ENCODE measurements at regions of chr6 and their contacts with region 1.

Region 1: DNA sequence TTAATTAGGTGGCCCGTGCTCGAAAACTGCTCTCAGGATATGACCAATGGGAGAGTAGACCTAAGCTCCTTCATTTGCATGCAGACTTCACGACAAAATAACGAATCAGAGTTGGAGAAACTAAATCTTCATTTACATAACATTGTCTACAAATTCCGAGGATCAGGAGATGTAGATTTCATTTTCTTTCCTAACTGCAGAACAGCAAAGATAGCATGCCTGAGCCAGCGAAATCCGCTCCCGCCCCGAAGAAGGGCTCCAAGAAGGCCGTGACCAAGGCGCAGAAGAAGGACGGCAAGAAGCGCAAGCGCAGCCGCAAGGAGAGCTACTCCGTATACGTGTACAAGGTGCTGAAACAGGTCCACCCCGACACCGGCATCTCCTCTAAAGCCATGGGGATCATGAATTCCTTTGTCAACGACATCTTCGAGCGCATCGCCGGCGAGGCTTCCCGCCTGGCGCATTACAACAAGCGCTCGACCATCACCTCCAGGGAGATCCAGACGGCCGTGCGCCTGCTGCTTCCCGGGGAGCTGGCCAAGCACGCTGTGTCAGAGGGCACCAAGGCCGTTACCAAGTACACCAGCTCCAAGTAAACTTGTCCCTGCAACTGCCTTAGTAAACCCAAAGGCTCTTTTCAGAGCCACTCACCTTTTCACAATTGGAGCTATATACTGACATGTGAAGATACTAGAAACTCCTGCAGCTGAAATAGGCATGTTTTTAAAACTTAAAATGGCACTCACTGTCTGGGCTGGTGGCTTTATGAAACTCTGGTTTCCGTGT is 96.5 kb downstream of the HFE start:
- DNase-seq: peak; percentile 93
- ATAC-seq: peak; percentile 86
- H3K4me3 ChIP-seq: peak overlapping the region; percentile 51 to 66
- H3K27ac ChIP-seq: peak overlapping the region; percentile 95
- H3K4me1 ChIP-seq: peaks cover 30% of the 10 kb centered on the region
- H3K27me3 ChIP-seq: no peaks in the 10 kb centered on the region
- CTCF ChIP-seq: no peak

Region 2: GRCh38 chr6:26131618-26132017 is 52.2 kb before region 1 on chr6:
- CTCF ChIA-PET with region 1: no interaction called
- POLR2A ChIA-PET with region 1: no interaction called
- in situ Hi-C with region 1: no loop called
- intact Hi-C with region 1: no loop called
- DNase-seq: no peak
- ATAC-seq: no peak
- H3K4me3 ChIP-seq: no peak overlapping the region
- H3K27ac ChIP-seq: no peak overlapping the region
- H3K4me1 ChIP-seq: peaks cover 16% of the 10 kb centered on the region; the same call in 1 of the 2 replicates
- H3K27me3 ChIP-seq: no peaks in the 10 kb centered on the region
- CTCF ChIP-seq: no peak

Region 3: DNA sequence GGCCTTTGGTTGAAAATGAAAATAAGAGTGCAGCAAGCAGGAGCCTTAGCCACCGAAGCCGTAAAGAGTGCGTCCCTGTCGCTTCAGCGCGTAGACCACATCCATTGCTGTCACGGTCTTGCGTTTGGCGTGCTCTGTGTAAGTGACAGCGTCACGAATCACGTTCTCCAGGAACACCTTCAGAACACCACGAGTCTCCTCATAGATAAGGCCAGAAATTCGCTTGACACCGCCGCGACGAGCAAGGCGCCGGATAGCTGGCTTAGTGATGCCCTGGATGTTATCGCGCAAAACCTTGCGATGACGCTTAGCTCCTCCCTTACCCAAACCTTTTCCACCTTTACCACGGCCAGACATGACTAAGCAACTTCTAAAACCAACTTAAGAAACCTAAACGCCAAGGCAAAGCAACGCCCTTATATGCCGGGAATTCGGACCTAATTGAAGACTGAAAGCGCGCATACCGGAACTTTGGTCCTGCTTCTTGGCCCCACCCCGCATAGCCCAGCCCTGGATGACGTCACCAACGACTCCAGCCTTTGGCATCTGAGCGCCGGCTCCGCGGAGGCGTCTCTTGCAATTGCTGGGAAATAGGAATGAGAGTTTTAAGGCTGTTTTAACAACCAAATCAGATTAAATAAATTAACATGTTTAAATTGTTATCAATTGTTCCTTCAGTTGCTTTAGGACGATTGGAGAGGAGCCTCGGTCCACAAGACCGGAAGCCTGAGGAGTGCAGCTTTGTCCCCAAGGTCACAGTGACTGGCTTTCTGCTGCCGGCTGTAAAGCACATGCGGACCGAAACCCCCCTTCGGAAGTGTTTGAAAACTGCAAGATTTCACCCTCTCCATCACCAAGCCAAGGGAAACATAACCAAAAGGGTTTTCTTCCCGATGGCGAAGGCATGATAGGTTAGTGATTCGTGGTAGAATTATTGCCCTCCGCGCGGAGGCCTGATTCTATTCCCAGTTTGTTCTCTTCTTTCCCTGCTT is 101.7 kb after region 1 on chr6:
- CTCF ChIA-PET with region 1: no interaction called
- POLR2A ChIA-PET with region 1: interaction called, 3 read pairs
- in situ Hi-C with region 1: no loop called
- intact Hi-C with region 1: loop called (anchors 10 kb)
- DNase-seq: peak; percentile 100
- ATAC-seq: peak; percentile 89
- H3K4me3 ChIP-seq: peak overlapping the region; percentile 66 to 96
- H3K27ac ChIP-seq: peak overlapping the region; percentile 95
- H3K4me1 ChIP-seq: peaks cover 12% of the 10 kb centered on the region; the same call in 1 of the 2 replicates
- H3K27me3 ChIP-seq: no peaks in the 10 kb centered on the region
- CTCF ChIP-seq: no peak

Region 4: DNA sequence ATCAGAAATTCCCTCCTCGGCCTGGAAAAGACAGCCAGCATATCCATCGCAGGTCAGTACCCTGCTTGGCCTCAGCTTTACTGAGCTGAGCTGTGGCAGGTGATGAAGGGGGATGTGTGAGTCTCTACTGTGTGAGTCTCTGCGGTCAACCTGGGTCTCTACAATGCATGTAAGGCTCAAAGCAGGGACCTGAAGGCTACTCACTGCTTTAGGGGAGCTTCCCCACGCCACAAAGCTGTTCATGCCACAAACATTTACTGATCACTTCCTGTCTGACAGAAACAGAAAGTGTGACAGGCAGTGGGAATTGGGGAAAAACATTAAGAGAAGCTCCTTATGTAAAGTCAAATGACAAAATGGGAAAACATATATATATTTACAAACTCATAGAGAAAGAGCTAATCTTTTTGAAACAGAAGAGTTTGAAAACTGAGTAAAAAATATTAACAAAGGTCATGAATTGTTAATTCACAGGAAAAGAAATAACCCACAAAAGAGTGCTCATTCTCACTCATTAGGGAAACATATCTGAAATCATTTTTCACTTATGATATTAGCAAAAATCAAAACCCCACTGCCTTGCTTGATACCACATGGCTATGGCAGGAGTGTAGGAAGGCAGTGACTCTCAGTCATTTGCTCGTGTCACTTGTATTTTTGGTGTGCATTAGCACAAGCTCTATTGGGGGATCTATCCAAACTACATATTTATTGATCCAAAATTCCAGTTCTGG is 262.3 kb after region 1 on chr6:
- CTCF ChIA-PET with region 1: no interaction called
- POLR2A ChIA-PET with region 1: no interaction called
- in situ Hi-C with region 1: no loop called
- intact Hi-C with region 1: no loop called
- DNase-seq: no peak
- ATAC-seq: no peak
- H3K4me3 ChIP-seq: no peak overlapping the region
- H3K27ac ChIP-seq: no peak overlapping the region
- H3K4me1 ChIP-seq: no peaks in the 10 kb centered on the region
- H3K27me3 ChIP-seq: no peaks in the 10 kb centered on the region
- CTCF ChIP-seq: no peak

Region 5: DNA sequence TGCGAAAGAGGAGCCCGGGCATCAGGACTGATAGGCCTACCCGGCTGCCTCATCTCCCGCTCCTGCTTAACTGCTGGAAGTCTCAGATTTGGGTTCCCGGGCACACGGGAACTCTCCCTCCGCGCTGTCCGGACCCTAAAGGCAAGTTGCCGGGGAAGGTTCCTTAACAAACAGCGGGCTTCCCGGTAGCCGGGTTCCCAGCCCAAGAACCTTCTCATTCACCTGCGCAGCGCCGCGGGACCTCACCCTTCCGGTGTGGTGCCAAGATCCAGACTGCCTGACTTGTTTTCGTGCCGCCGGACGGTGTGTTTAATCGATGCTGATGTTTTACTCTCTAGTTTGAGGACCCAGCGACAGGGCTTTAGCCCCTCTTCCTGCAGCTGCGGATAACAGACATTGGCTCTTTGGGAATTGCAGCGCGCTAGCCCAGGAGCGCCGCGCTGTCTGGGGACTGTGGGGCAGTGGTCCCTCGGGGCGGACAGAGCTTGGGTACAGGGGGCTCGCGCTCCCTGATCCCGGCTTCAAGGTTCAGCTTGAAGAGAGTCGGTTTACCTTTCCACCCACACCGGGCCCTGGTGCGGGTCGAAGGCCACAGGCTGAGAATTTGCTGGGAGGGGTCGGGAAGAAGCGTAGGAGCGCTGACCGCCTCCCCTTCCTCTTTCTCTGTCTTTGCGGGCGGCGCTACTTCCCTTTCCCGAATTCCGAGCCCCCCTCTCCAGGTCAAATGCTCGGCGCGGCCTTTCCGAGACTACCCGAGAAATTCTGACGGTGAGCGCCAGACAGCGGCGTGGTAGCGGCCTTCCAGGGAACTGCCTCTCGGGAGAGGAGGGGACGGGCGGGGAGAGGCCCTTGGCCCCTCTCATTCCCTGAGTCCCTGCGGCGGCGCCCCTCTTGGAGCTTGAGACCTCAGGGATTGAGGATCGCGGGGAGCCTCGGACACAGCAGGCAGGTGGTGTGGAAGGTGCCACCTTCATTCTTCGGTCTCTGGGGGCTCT is 430.2 kb after region 1 on chr6:
- CTCF ChIA-PET with region 1: no interaction called
- POLR2A ChIA-PET with region 1: no interaction called
- in situ Hi-C with region 1: no loop called
- intact Hi-C with region 1: no loop called
- DNase-seq: no peak
- ATAC-seq: no peak
- H3K4me3 ChIP-seq: no peak overlapping the region
- H3K27ac ChIP-seq: no peak overlapping the region
- H3K4me1 ChIP-seq: no peaks in the 10 kb centered on the region
- H3K27me3 ChIP-seq: no peaks in the 10 kb centered on the region
- CTCF ChIP-seq: no peak